ENCODE measurements at regions of chr1 and their contacts with region 1.

Region 1: DNA sequence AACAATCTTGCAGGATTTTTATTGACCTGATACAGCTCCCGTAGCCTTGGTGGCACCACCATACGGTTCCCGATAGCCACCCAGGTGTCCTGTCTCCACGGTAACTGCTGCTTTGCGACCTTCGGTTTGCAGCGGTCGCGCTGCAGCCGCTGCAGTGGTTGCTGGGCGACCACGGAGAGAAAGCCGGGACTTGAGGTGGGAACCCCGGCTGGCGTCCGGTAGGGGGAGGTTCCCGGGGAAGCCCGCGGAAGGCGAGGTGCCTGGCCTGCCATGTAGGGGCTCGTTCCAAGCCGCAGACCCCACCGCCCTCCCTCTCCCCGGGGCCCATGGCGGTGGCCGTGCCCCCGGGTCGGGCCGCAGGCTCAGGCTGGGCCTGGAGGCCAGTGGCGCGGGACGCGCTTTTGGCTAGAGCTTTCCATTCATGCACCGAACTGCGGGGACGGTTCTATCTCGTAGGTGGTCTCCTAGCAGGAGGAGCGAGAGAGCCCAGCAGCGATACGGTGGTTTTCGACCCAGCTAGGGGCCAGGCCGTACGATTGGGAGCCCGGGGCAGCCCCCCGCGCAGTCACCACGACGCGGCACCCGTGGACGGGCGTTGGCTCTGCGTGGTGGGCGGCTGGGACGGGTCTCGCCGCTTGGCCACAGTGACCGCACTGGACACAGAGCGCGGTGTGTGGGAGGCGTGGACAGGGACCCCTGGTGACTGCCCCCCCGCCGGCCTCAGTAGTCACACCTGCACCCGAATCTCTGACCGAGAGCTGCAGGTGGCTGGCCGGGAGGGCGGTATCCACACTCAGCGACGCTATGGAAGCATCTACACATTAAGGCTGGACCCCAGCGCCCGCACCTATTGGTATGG is at the start of gene KLHDC9:
- DNase-seq: peak; percentile 22 to 78 (median 48)
- ATAC-seq: peak; percentile 61 to 77 (median 68)
- H3K4me3 ChIP-seq: peak within 1 kb of the TSS; percentile 51 to 87
- H3K4me3 Mint-ChIP-seq: peak within 1 kb of the TSS; percentile 81 to 88 (median 86)
- H3K27ac ChIP-seq: peak within 1 kb of the TSS; percentile 75
- H3K27ac Mint-ChIP-seq: peak within 1 kb of the TSS; percentile 85 to 93
- H3K4me1 ChIP-seq: peaks cover 2 to 20% of the 10 kb centered on the region in 2 experiments
- H3K4me1 Mint-ChIP-seq: peaks cover 16 to 25% (median 24%) of the 10 kb centered on the region in 3 donors
- H3K27me3 ChIP-seq: no peaks in the 10 kb centered on the region
- H3K27me3 Mint-ChIP-seq: peaks cover 0 to 3% of the 10 kb centered on the region in 2 donors
- total RNA-seq, gene KLHDC9: 0.82 to 1.6 (median 0.86) TPM in 3 of 5 donors, not detected in the others

Region 2: DNA sequence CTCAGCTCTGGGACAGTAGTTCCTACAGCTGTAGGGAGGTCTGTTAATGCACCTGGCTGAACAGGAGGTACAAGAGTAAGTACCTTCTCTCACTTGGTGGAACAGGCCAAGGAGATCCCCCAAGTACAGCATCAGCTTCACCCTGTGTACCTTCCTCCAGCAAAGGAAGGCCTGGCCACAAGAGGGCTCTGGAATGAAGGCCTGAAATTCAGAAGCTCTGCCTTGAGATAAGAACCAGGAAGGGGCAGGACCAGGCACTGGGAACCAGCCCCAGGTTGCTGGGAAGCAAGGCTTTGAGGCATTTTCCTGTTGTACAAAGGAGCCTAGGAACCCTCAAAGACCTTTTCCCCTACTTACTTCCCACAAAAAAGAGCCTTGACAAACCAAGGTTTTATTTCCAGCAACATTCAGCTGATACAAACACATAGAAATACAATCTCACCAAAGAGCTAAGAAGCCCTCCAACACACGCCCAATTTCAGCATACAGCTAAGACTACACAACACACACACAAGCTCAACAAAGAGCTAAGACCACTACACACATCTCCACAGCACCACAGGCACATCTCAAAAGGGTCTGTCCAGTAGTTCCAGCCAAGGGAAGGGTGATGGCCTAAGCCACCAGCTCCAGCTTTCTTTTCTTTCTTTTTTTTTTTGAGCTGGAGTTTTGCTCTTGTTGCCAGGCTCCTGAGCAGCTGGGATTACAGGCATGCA is 101.0 kb before region 1 on chr1:
- CTCF ChIA-PET with region 1: interaction called, 8 to 23 read pairs
- POLR2A ChIA-PET with region 1: no interaction called
- DNase-seq: peak in 29 of 35 experiments; percentile 12 to 66 (median 39)
- ATAC-seq: peak; percentile 76 to 87 (median 80)
- H3K4me3 ChIP-seq: no peak overlapping the region
- H3K4me3 Mint-ChIP-seq: no peak overlapping the region
- H3K27ac ChIP-seq: no peak overlapping the region
- H3K27ac Mint-ChIP-seq: peak overlapping the region; percentile 53 to 69
- H3K4me1 ChIP-seq: peaks cover 0 to 4% of the 10 kb centered on the region in 2 experiments
- H3K4me1 Mint-ChIP-seq: peaks cover 5 to 8% (median 5%) of the 10 kb centered on the region in 3 donors
- H3K27me3 ChIP-seq: no peaks in the 10 kb centered on the region
- H3K27me3 Mint-ChIP-seq: no peaks in the 10 kb centered on the region

Region 3: DNA sequence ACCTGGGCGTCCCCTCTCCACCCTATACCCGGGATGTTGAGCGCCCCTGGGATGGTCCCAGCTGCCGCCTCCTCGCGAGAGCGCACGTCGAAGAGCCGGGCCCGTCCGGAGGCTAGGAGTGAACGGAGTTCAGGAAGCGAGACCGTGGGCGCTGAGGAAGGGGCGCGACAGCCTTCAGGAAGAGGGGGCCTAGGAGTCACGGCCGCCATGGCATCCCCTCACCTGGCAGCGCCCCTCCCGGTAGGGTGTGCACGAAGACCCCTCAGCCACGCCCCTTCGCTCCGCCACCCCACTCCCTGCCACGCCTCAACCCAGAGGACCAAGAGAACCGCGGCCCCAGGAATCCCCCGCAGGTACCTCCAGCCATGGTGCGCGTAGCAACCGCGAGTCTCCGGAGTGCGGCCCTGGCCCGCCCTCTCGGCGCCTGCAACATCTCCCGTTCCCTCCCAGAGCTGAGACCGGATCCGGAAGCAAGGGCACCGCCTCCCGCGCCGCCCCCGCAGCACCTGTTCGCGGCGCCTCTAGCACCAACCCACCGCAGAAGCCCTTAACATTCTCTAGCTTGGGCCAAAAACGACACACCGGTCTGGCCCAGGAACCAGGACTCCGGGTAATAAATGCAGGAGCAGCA is 59.8 kb before region 1 on chr1 and contains the start of gene TSTD1:
- CTCF ChIA-PET with region 1: interaction called, 22 to 25 read pairs
- POLR2A ChIA-PET with region 1: no interaction called
- DNase-seq: peak; percentile 77 to 94 (median 87)
- ATAC-seq: peak; percentile 87 to 94 (median 92)
- H3K4me3 ChIP-seq: peak within 1 kb of the TSS; percentile 70 to 95
- H3K4me3 Mint-ChIP-seq: peak within 1 kb of the TSS; percentile 88 to 90 (median 89)
- H3K27ac ChIP-seq: peak within 1 kb of the TSS; percentile 76
- H3K27ac Mint-ChIP-seq: peak within 1 kb of the TSS; percentile 95
- H3K4me1 ChIP-seq: peaks cover 16 to 42% of the 10 kb centered on the region in 2 experiments
- H3K4me1 Mint-ChIP-seq: peaks cover 40 to 51% (median 51%) of the 10 kb centered on the region in 3 donors
- H3K27me3 ChIP-seq: no peaks in the 10 kb centered on the region
- H3K27me3 Mint-ChIP-seq: no peaks in the 10 kb centered on the region
- total RNA-seq, gene TSTD1: 39.9 to 130 (median 94.8) TPM

Region 4: GRCh38 chr1:161045750-161046571 is 52.5 kb before region 1 on chr1 and contains the start of gene USF1:
- CTCF ChIA-PET with region 1: interaction called, 22 to 25 read pairs
- POLR2A ChIA-PET with region 1: interaction called in 1 of 2 experiments, 3 read pairs
- DNase-seq: peak; percentile 82 to 97 (median 91)
- ATAC-seq: peak; percentile 82 to 85 (median 83)
- H3K4me3 ChIP-seq: peak within 1 kb of the TSS; percentile 95 to 97
- H3K4me3 Mint-ChIP-seq: peak within 1 kb of the TSS; percentile 89 to 98 (median 90)
- H3K27ac ChIP-seq: peak within 1 kb of the TSS; percentile 85
- H3K27ac Mint-ChIP-seq: peak within 1 kb of the TSS; percentile 98 to 100
- H3K4me1 ChIP-seq: peaks cover 14 to 35% of the 10 kb centered on the region in 2 experiments
- H3K4me1 Mint-ChIP-seq: peaks cover 39 to 56% (median 49%) of the 10 kb centered on the region in 3 donors
- H3K27me3 ChIP-seq: no peaks in the 10 kb centered on the region
- H3K27me3 Mint-ChIP-seq: no peaks in the 10 kb centered on the region
- total RNA-seq, gene USF1: 65.4 to 96.1 (median 92.2) TPM

Region 5: DNA sequence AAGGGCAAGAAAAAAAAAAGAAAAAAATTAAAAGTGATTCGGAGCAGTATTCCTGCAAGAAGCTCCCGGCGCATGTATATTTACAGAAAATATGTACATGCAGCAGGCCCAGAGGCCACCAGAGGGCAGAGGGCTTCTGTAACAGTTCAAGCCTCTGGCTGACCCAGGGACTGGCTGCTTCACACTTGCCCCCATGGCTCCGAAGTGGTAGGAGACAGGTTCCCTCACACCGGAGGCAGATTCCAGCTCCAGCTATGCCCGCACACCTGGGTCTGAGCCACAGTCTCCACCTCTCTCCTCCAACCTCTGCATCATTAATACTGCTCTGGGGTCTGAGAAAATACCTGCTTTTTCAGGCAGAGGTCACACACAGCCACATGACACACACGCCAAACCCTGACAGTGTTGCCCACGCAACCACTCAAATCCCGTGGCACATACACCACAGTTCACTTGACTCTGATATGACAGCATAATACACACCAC is 26.5 kb before region 1 on chr1:
- CTCF ChIA-PET with region 1: interaction called, 10 to 20 read pairs
- POLR2A ChIA-PET with region 1: interaction called, 3 to 5 read pairs
- DNase-seq: peak in 29 of 35 experiments; percentile 12 to 68 (median 37)
- ATAC-seq: no peak
- H3K4me3 ChIP-seq: no peak overlapping the region
- H3K4me3 Mint-ChIP-seq: no peak overlapping the region
- H3K27ac ChIP-seq: no peak overlapping the region
- H3K27ac Mint-ChIP-seq: peak overlapping the region in 1 of 2 donors; percentile 99
- H3K4me1 ChIP-seq: peaks cover 19 to 41% of the 10 kb centered on the region in 2 experiments
- H3K4me1 Mint-ChIP-seq: peaks cover 38 to 52% (median 41%) of the 10 kb centered on the region in 3 donors
- H3K27me3 ChIP-seq: no peaks in the 10 kb centered on the region
- H3K27me3 Mint-ChIP-seq: no peaks in the 10 kb centered on the region

Region 6: DNA sequence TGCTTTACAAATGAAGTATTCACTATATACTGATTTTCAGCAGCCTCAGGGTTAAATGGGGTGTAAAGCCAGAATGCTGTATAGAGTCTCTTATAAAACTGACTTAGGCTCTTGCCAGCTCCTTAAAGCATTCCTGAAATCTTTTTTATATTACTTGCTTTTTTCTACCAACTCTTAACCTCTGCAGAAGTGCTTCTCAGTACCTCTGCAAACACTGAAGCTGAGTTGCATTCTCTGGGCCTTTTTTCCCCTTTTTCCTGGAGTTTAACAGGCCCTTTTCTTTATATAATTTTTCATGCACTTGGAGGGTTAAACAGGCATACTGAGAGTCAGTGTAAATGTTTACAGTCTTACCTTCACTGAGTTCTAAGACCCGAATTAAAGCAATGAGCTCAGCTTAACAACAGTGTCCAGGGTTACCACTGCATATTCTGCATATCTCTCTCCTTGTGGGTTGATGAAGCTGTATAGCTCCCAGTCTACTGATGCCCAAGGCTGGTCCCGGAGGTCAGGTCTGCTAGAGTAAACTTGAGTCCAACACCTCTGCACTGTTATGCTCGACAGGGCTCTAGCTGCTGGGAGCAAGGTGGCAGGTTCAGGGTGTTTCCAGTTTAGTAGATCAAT is 310.1 kb after region 1 on chr1:
- CTCF ChIA-PET with region 1: no interaction called
- POLR2A ChIA-PET with region 1: no interaction called
- DNase-seq: no peak
- ATAC-seq: no peak
- H3K4me3 ChIP-seq: no peak overlapping the region
- H3K4me3 Mint-ChIP-seq: no peak overlapping the region
- H3K27ac ChIP-seq: no peak overlapping the region
- H3K27ac Mint-ChIP-seq: no peak overlapping the region
- H3K4me1 ChIP-seq: peaks cover 0 to 10% of the 10 kb centered on the region in 2 experiments
- H3K4me1 Mint-ChIP-seq: peaks cover 28 to 31% (median 29%) of the 10 kb centered on the region in 3 donors
- H3K27me3 ChIP-seq: no peaks in the 10 kb centered on the region
- H3K27me3 Mint-ChIP-seq: peaks cover 2 to 5% of the 10 kb centered on the region in 2 donors